Activated T-helper 1 cell treated with anti-CD3 and anti-CD28 coated beads, Interleukin-12 subunit alpha, Interleukin-12 subunit beta, Interleukin-2, Interleukin-4 antibody, amounts not matched to agents 30 ng/mL and 10 ng/mL and 1 ng/mL, durations not matched to agents 14 hours and 24 hours and 36 hours (primary cell): ENCODE measurements at regions of chr12 and their contacts with region 1.

Region 1: GRCh38 chr12:75977952-75978671 is 53.5 kb downstream of the PHLDA1 start:
- DNase-seq: peak; percentile 81
- H3K4me3 Mint-ChIP-seq: peak overlapping the region; percentile 38
- H3K27ac Mint-ChIP-seq: peak overlapping the region; percentile 94
- H3K4me1 Mint-ChIP-seq: peaks cover 77% of the 10 kb centered on the region
- H3K27me3 Mint-ChIP-seq: no peaks in the 10 kb centered on the region

Region 2: GRCh38 chr12:75511116-75512048 is 466.7 kb before region 1 on chr12 and contains the start of gene KRR1:
- intact Hi-C with region 1: loop called (anchors 1 kb)
- DNase-seq: peak; percentile 89
- H3K4me3 Mint-ChIP-seq: peak within 1 kb of the TSS; percentile 97
- H3K27ac Mint-ChIP-seq: peak within 1 kb of the TSS; percentile 98
- H3K4me1 Mint-ChIP-seq: peaks cover 45% of the 10 kb centered on the region
- H3K27me3 Mint-ChIP-seq: peaks cover 3% of the 10 kb centered on the region
- total RNA-seq, gene KRR1: 130 and 137 TPM in 2 replicates

Region 3: GRCh38 chr12:75738486-75738885 is 239.6 kb before region 1 on chr12:
- intact Hi-C with region 1: loop called (anchors 2 kb)
- DNase-seq: peak; percentile 9
- H3K4me3 Mint-ChIP-seq: no peak overlapping the region
- H3K27ac Mint-ChIP-seq: peak overlapping the region; percentile 53
- H3K4me1 Mint-ChIP-seq: peaks cover 22% of the 10 kb centered on the region
- H3K27me3 Mint-ChIP-seq: peaks cover 5% of the 10 kb centered on the region

Region 4: GRCh38 chr12:75939016-75939642 is 39.0 kb before region 1 on chr12:
- intact Hi-C with region 1: loop called (anchors 1 kb)
- DNase-seq: no peak
- H3K4me3 Mint-ChIP-seq: no peak overlapping the region
- H3K27ac Mint-ChIP-seq: no peak overlapping the region
- H3K4me1 Mint-ChIP-seq: peaks cover 16% of the 10 kb centered on the region
- H3K27me3 Mint-ChIP-seq: peaks cover 4% of the 10 kb centered on the region

Region 5: GRCh38 chr12:76020731-76021672 is 42.9 kb after region 1 on chr12:
- intact Hi-C with region 1: loop called (anchors 1 kb)
- DNase-seq: peak; percentile 68
- H3K4me3 Mint-ChIP-seq: peak overlapping the region; percentile 74
- H3K27ac Mint-ChIP-seq: peak overlapping the region; percentile 99
- H3K4me1 Mint-ChIP-seq: peaks cover 73% of the 10 kb centered on the region
- H3K27me3 Mint-ChIP-seq: no peaks in the 10 kb centered on the region

Region 6: GRCh38 chr12:76559400-76560085 is 581.4 kb after region 1 on chr12 and contains the start of gene OSBPL8:
- intact Hi-C with region 1: loop called (anchors 2 kb)
- DNase-seq: peak; percentile 91
- H3K4me3 Mint-ChIP-seq: peak within 1 kb of the TSS; percentile 94
- H3K27ac Mint-ChIP-seq: peak within 1 kb of the TSS; percentile 98
- H3K4me1 Mint-ChIP-seq: peaks cover 49% of the 10 kb centered on the region
- H3K27me3 Mint-ChIP-seq: no peaks in the 10 kb centered on the region
- total RNA-seq, gene OSBPL8: 86.9 and 95.9 TPM in 2 replicates